ENCODE measurements at regions of chr5 and their contacts with region 1.

Region 1: DNA sequence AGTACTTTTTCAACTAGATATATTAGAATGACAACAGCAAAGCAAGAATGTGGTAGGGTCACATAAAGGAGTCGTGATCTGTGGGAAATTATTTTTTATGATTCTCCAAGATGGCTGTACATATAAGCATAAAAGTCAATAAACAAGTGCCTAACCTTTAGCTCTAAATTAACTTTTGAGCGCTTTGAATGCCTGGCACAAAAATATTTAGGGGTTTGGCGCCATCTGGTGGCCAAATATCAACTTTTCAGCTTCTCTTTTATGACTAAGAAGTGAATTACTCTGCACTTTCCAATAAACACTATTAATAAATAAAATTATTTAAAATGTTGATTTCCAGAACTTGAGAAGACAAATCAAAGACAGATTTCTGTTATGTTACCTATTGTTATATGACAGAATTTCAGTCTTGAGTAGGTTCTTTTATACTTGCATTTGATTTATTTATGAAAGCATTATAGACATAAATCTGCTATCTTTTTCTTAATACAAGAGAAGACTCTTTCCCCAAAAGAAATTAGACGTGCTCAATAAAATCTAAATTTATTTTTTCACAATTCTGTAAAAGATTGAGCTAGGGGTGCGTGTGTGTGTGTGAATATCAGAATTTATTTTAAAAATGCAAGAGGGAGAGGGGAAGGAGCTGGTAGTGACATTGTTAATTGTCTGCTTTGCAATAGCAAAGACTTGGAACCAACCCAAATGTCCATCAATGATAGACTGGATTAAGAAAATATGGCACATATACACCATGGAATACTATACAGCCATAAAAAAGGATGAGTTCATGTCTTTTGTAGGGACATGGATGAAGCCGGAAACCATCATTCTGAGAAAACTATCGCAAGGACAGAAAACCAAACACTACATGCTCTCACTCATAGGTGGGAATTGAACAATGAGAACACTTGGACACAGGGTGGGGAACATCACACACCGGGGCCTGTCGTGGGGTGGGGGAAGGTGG is 36.7 kb upstream of the ARRDC3 start:
- DNase-seq: no peak
- ATAC-seq: no peak

Region 2: DNA sequence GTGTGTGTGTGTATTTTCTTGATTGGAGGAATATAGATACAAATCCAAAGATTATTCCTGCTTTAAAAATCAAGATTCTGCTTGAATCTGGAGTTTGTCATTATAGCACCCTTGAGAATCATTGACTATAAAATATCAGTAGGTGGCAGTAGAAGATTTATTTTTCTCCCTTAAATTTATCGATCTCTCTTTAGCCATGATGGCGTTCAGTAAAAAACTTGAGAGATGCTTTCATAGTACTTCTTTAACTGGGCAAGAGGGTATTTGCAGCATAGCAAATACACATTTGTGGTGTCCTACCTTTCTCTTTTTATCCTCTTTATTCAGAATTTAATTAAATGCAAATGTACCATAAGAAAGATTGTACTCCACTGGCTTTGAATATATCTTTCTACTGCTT is 553.5 kb before region 1 on chr5:
- intact Hi-C with region 1: loop called (anchors 2 kb)
- DNase-seq: no peak
- ATAC-seq: no peak

Region 3: DNA sequence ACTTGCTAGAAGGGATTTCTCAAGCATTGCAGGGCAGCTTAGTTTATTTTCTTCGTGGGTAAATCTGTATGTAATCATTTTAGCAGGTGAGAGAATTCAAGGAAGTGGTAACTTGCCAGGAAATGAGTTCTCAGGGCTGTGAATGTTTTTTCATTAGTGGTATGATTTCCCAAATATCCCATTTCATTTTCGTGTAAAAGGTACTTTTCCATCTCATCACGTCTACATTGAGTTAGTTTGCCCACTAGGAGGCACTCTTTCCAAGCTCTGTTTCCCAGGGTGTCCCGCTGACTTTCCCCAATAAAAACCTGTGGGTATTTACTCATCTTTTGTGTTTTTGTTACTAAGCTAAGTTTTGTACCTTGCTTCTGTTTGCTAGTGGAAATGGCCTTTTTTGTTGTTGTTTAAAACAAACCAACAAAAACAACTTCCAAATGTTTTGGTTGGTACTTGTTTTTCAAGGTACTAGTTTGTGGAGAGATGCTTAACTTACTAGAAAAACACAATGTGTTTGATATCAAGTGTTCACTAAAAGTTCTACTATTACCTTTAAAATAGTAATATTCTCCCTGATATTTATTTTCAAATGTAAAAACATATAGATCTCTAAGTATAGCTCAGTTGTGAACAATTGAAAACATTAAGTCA is 487.7 kb before region 1 on chr5:
- intact Hi-C with region 1: loop called (anchors 2 kb)
- DNase-seq: no peak
- ATAC-seq: peak; percentile 56

Region 4: DNA sequence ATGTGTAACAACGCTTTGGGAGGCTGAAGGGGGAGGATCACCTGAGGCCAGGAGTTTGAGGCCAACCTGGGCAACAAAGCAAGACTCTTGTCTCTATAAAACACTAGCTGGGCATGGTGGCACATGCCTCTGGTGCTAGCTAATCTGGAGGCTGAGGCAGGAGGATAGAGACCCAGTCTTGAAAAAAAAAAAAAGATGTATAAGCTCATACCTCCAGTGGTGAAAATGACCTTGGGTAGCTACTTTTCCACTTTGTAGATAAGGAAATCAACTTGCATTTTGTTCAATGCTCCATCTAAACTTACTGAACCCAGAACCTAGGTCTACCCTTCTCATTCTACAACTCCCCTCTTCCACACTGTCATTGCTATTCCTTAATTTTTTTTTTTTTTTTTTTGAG is 53.3 kb before region 1 on chr5:
- intact Hi-C with region 1: no loop called
- DNase-seq: no peak
- ATAC-seq: no peak

Measured in Right ventricle myocardium inferior (tissue), 1 donor.